Head of caudate nucleus (tissue), 42 donors: ENCODE measurements at regions of chr2 and their contacts with region 1.

Region 1: DNA sequence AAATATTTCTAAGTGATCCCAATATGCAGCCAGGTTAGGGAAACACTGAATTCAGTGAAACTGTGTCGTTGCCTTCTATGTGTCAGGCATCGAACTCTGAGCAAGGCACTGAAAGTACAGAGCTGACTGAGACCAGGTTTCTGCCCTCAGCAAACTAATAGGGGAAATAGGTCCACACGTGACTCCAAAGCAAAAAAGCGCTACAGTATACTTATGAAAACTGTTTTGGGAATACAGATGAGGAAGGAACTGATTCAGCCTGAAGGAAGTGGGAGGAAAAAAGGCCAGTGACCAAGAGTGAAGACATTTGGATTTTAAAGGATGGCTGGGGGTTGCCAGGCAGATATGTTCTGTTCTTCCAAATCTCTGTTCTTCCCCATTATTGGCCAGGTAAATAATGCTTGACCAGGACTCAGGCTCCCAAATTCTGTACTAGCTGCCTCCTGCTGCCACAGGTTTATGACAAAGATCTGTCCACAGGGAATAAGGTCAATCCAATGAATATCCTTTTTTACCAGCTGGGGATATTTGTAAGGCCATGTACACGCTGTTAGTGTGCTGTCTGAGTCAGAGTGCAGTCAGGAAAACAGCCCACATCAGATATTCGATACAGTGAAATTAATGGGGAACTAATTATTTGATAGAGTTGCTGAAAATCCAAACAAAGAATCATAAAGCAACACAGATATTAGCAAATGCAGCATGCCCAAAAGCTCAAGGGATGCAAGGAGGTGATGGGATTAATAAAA is 24.5 kb upstream of the INPP4A start:
- DNase-seq: no peak

Region 2: DNA sequence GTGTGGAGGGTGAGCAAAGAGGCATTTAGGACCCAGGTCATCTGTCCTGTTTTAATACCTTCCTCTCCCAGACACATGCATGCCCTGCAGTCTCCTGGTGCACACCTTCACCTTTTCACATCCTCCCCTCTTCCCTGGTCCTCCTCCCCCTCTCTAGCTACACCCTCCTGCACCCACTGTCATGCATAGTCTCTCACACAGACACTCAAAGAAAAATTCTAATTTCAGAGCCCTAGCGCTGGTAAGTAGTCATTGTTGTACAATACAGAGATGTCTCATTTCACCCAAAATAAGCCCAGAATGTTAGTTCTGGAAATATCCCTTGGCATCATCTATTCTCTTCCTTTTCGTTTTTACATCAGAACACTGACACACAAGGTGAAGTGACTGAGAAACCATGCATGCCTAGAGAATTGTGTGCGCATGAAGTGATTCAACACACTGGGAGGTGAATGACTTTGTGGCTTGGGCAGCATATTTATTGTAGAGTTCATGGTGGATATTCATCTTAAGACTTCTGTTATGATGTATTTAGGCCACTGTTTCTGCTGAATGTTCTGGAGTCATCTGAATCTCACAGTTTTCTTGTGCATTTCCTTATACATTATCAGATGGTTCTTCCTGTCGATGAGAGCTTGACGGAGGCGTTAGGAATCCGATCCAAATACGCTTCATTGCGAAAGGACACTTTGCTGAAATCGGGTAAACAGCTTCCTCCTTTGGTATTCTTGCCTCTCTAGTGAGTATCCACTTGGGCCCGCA is 118.3 kb after region 1 on chr2:
- intact Hi-C with region 1: loop called (anchors 10 kb)
- DNase-seq: peak in 3 of 42 donors; percentile 33 to 66 (median 62)

Region 3: GRCh38 chr2:98654699-98655495 is 234.7 kb after region 1 on chr2:
- intact Hi-C with region 1: no loop called
- DNase-seq: no peak